Transverse colon (tissue), 4 donors: ENCODE measurements at regions of chr1 and their contacts with region 1.

Region 1: GRCh38 chr1:109671067-109671466 is 3.2 kb downstream of the GSTM2 start:
- DNase-seq: peak; percentile 17
- H3K4me3 ChIP-seq: no peak overlapping the region
- H3K27ac ChIP-seq: no peak overlapping the region
- H3K4me1 ChIP-seq: peaks cover 0 to 14% (median 6%) of the 10 kb centered on the region in 4 donors
- H3K27me3 ChIP-seq: no peaks in the 10 kb centered on the region
- CTCF ChIP-seq: no peak
- EP300 ChIP-seq: no peak
- POLR2A ChIP-seq: no peak

Region 2: GRCh38 chr1:108892356-108893140 is 778.5 kb before region 1 on chr1:
- in situ Hi-C with region 1: no loop called
- intact Hi-C with region 1: no loop called
- DNase-seq: no peak
- H3K4me3 ChIP-seq: no peak overlapping the region
- H3K27ac ChIP-seq: no peak overlapping the region
- H3K4me1 ChIP-seq: peaks cover 0 to 22% (median 8%) of the 10 kb centered on the region in 4 donors
- H3K27me3 ChIP-seq: no peaks in the 10 kb centered on the region
- CTCF ChIP-seq: no peak
- EP300 ChIP-seq: no peak
- POLR2A ChIP-seq: no peak

Region 3: GRCh38 chr1:109532365-109533136 is 138.5 kb before region 1 on chr1:
- in situ Hi-C with region 1: no loop called
- intact Hi-C with region 1: no loop called
- DNase-seq: peak; percentile 89
- H3K4me3 ChIP-seq: peak overlapping the region in 1 of 4 donors; percentile 20
- H3K27ac ChIP-seq: peak overlapping the region in 3 of 4 donors; percentile 21 to 58 (median 34)
- H3K4me1 ChIP-seq: peaks cover 4 to 25% (median 7%) of the 10 kb centered on the region in 4 donors
- H3K27me3 ChIP-seq: no peaks in the 10 kb centered on the region
- CTCF ChIP-seq: peak; percentile 97 to 99 (median 99)
- EP300 ChIP-seq: no peak
- POLR2A ChIP-seq: no peak

Region 4: DNA sequence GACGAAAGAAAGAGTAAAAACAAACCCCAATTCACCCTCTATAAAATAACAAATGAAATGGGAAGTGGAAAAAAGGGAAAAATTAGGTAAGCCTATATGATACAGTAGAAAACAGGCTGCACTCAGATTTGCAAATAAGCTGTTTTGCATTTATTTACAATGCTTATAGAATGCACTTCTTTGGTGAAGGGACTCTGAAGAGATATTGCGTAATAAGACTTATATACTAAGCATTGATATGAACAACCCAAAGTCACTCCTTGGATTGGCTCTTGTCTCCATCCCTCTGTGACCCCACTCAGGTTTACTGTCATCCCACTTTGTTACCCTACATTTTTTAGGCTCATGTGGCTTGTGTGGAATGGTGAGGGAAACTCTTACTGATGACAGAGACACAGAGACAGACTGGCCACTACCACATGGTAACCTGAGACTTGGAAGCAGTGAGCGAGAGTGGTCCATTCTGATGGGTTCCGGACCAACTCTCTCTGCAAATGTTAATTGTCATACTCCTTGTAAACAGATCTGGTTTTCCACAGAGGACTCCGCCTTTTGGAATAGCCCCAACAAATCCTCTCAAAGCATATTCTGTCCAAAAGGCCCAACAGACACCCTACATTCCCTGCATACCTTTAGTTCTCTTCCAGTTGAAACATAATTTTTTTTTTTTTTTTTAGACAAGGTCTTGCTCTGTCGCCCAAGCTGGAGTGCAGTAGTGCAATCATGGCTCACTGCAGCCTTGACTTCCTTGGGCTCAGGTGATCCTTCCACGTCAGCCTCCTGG is 52.0 kb after region 1 on chr1:
- in situ Hi-C with region 1: loop called in 1 of 4 experiments (anchors 5 kb)
- intact Hi-C with region 1: no loop called
- DNase-seq: no peak
- H3K4me3 ChIP-seq: no peak overlapping the region
- H3K27ac ChIP-seq: no peak overlapping the region
- H3K4me1 ChIP-seq: peaks cover 0 to 4% (median under 1%) of the 10 kb centered on the region in 4 donors
- H3K27me3 ChIP-seq: no peaks in the 10 kb centered on the region
- CTCF ChIP-seq: no peak
- EP300 ChIP-seq: no peak
- POLR2A ChIP-seq: no peak

Region 5: DNA sequence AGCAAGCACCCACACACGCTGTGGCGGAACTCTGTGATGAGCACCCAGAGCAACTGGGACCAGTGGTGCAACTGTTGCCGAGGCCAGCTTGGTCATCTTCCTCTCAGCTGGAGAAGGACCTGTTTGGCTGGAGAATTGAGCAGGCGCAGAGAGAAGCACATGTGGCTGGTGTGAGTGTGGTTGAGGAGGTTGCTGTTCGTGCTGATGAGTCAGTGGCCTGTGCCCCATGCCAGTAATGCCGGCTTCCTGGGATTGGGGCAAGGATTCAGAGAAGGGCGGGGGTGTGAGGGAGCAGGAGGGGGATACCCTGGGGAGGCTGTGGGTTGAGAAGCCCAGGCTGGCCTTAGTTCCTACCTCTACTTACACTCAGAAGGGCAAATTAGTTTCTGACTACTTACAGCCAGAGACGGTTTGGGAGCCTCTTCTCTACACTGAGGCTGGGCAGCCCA is 150.2 kb after region 1 on chr1:
- in situ Hi-C with region 1: no loop called
- intact Hi-C with region 1: no loop called
- DNase-seq: peak; percentile 34
- H3K4me3 ChIP-seq: no peak overlapping the region
- H3K27ac ChIP-seq: peak overlapping the region; percentile 23 to 61 (median 42)
- H3K4me1 ChIP-seq: peaks cover 0 to 34% (median 9%) of the 10 kb centered on the region in 4 donors
- H3K27me3 ChIP-seq: no peaks in the 10 kb centered on the region
- CTCF ChIP-seq: no peak
- EP300 ChIP-seq: no peak
- POLR2A ChIP-seq: no peak